ENCODE measurements at regions of chr18 and their contacts with region 1.

Region 1: GRCh38 chr18:24488824-24489493 is 28.5 kb downstream of the HRH4 start:
- DNase-seq: no peak
- H3K4me3 ChIP-seq: no peak overlapping the region
- H3K27ac ChIP-seq: no peak overlapping the region
- H3K27me3 ChIP-seq: peaks cover 13% of the 10 kb centered on the region
- CTCF ChIP-seq: peak; percentile 75

Region 2: GRCh38 chr18:24176727-24177416 is 312.1 kb before region 1 on chr18:
- CTCF ChIA-PET with region 1: interaction called, 63 read pairs
- POLR2A ChIA-PET with region 1: no interaction called
- DNase-seq: peak; percentile 10
- H3K4me3 ChIP-seq: no peak overlapping the region
- H3K27ac ChIP-seq: no peak overlapping the region
- H3K27me3 ChIP-seq: no peaks in the 10 kb centered on the region
- CTCF ChIP-seq: peak; percentile 82

Region 3: GRCh38 chr18:24362758-24363157 is 126.2 kb before region 1 on chr18:
- CTCF ChIA-PET with region 1: interaction called, 155 read pairs
- POLR2A ChIA-PET with region 1: no interaction called
- DNase-seq: no peak
- H3K4me3 ChIP-seq: no peak overlapping the region
- H3K27ac ChIP-seq: no peak overlapping the region
- H3K27me3 ChIP-seq: no peaks in the 10 kb centered on the region
- CTCF ChIP-seq: no peak

Region 4: DNA sequence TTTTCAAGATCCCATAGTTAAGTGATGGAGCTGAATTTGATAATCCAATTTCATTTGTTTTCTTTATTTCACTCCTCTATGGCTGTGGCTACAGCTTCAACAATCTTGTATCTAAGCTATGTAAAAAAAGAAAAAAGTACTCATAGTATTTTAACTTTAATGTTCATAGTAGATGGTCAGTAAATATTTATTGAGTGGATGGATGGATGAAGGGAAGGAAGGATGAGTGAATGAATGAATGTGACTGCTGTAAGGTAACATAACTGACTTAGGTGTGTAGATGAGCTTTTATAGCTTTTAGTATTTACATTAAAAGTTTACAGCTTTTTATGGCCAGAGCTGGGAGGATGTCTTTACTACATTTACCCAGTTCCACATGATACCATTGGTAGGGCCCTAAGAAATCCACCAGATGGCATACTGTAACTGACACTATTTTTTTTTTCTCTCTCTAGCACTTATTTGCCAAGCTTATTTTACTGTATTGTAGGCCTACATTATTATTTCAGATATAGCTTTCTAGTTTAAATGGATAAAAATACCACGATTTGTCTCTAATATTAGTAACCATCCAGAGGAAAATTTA is 41.9 kb before region 1 on chr18:
- CTCF ChIA-PET with region 1: interaction called, 44 read pairs
- POLR2A ChIA-PET with region 1: no interaction called
- DNase-seq: no peak
- H3K4me3 ChIP-seq: no peak overlapping the region
- H3K27ac ChIP-seq: no peak overlapping the region
- H3K27me3 ChIP-seq: no peaks in the 10 kb centered on the region
- CTCF ChIP-seq: peak; percentile 22; the same call in 1 of the 2 replicates

Region 5: DNA sequence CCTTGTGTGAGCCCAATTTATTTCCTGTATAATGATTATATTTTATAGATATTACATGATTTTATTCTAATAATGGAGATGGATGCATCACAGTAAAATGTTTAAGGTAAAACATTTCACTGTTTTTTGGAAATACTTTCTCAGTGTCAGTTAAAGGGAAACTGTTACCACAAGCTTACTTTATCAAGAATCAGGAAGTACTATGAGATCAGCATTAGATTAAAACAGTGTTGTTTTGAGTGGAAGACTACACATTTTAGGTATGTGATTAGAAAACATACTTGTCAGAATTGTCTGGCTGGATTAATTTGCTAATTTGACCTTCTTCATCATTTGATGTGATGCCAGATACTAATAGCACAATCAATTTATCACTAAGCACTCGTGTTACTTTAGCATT is 28.6 kb before region 1 on chr18 and contains the start of gene HRH4:
- CTCF ChIA-PET with region 1: interaction called, 16 read pairs
- POLR2A ChIA-PET with region 1: no interaction called
- DNase-seq: no peak
- H3K4me3 ChIP-seq: no peak within 1 kb of the TSS
- H3K27ac ChIP-seq: no peak within 1 kb of the TSS
- H3K27me3 ChIP-seq: no peaks in the 10 kb centered on the region
- CTCF ChIP-seq: no peak
- polyA plus RNA-seq, gene HRH4: 0.01 TPM in 1 of 2 replicates, not detected in the other

Region 6: DNA sequence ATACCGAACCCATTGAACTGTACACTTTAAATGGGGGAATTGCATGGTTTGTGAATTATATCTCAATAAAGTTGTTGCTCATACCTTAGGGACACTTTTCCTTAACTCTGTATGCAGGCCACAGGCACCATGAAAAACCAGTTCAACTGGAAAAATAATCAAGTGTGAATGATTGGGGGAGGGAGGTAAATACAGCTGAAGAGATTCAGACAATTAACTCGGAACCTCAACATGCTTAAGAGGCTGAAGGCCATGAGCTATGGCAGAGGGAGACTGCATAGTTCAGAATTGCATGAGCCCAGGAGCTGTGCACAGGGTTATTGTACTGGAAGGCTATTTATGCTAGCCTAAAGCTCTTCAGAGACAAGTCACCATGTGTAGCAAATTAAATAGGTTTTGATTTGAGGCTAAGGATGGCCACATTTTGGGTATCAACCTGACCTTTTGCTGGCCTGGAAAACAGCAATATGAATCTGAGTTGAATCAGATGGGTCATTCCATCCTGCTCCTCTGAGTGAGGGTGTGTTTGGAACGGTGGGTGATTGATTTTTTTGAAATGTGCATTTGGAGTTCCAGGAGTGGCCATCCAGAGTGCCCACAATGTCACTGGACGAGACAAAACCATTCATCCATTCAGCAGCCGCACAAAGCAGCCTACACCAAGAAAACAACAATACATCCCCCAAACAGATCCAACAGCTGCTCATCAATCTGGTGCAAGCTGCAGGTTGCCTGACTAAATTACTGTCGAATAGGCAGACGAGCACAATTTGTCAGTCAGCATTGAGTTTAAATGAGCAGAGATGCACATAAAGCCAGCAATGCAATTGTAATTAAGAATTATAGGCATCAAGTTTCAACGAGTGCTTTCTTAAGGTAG is 13.9 kb after region 1 on chr18:
- CTCF ChIA-PET with region 1: interaction called, 40 read pairs
- POLR2A ChIA-PET with region 1: no interaction called
- DNase-seq: no peak
- H3K4me3 ChIP-seq: no peak overlapping the region
- H3K27ac ChIP-seq: no peak overlapping the region
- H3K27me3 ChIP-seq: peaks cover 9% of the 10 kb centered on the region
- CTCF ChIP-seq: no peak